ENCODE measurements at regions of chr7 and their contacts with region 1.

Region 1: DNA sequence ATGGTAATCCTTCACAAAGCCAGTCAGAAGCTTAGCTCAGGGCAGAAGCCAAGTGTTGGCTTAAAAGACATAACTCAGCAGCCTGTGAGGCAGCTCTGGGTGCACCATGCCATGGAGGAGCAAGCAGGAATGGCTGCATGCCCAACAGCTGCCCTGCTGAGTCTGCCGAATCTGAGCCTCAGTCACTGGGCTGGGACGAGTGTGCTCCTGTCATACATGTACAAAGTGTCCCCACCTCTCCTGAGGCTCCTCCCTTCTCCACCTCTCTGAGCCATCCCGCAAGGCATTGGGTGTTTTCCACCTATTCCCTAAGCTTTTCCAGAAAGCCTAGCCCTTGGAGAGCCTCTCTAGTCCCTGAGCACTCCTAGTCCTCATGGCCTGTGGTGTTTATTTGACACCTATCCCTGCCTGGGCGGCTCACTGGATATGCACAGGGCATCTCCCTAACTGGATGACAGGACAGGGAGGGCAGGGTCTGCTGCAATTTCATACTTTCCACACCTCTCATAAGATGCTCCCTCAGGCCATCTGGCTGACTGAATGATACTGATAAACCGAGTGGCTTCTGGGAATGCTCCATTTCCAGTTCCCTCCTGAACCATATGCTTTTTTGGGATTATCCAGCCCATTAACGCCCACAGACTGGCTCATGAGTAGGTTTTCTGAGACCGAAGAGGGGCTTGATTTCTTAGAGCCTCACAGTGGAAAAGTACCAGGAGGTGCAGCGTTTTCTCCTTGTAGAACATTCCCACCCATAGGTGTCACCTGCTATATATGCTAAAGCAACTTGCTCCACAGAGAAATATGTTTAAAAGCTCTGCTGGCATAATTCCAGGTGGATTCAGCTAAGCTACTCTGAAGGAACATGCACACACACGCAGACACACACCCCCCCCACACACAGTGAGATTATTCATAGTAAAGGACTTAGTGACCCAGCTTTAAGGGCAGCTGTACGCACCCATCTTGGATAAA is 199.3 kb downstream of the SNX10 start:
- DNase-seq: peak; percentile 91
- H3K4me3 ChIP-seq: no peak overlapping the region
- H3K27ac ChIP-seq: no peak overlapping the region
- H3K4me1 ChIP-seq: peaks cover 17% of the 10 kb centered on the region
- H3K27me3 ChIP-seq: no peaks in the 10 kb centered on the region
- CTCF ChIP-seq: peak in 1 of 2 donors; percentile 40

Region 2: DNA sequence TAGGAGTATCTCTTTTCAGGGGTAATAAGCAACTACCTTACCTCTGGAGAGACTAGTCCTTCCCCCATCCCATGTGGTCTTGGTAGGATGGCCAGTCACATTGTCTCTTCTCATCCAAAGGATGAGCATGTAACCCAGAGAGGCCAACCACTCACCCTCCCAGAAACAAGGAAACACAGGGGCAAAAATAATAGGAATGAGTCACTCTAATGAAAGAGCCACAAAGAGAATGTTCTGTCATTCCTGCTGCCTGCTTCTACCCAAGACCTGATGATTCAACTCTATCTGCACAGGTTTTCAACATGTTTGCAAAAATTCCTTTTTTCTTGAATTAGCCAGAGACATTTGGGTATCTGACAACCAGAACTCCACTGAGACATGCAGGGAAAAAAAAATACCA is 438.2 kb before region 1 on chr7:
- CTCF ChIA-PET with region 1: no interaction called
- dilution Hi-C with region 1: loop called (anchors 5 kb)
- in situ Hi-C with region 1: no loop called
- intact Hi-C with region 1: no loop called
- DNase-seq: peak; percentile 82
- H3K4me3 ChIP-seq: no peak overlapping the region
- H3K27ac ChIP-seq: no peak overlapping the region
- H3K4me1 ChIP-seq: peaks cover 11% of the 10 kb centered on the region
- H3K27me3 ChIP-seq: no peaks in the 10 kb centered on the region
- CTCF ChIP-seq: no peak

Region 3: DNA sequence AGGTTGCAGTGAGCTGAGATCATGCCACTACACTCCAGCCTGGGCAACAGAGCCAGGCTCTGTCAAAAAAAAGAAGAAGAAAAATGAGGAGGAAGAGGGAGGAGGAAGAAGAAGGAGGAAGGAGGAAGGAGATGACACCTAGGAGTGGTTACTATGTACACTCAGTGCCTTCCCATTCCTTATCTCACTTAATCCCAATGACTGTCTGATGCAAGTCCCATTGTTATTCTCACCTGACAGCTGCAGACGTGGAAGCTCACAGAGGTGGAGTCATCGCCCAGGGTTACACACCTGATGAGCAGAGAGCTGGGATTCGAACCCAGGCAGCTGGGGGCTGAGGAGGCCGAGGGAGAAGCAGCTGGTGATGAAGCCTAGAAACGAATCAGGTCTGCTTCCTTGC is 59.6 kb after region 1 on chr7:
- CTCF ChIA-PET with region 1: interaction called, 7 read pairs
- dilution Hi-C with region 1: loop called (anchors 5 kb)
- in situ Hi-C with region 1: no loop called
- intact Hi-C with region 1: no loop called
- DNase-seq: peak; percentile 41
- H3K4me3 ChIP-seq: no peak overlapping the region
- H3K27ac ChIP-seq: peak overlapping the region; percentile 19
- H3K4me1 ChIP-seq: peaks cover 21% of the 10 kb centered on the region
- H3K27me3 ChIP-seq: no peaks in the 10 kb centered on the region
- CTCF ChIP-seq: no peak